Heart right ventricle (tissue), 16 donors: ENCODE measurements at regions of chr1 and their contacts with region 1.

Region 1: DNA sequence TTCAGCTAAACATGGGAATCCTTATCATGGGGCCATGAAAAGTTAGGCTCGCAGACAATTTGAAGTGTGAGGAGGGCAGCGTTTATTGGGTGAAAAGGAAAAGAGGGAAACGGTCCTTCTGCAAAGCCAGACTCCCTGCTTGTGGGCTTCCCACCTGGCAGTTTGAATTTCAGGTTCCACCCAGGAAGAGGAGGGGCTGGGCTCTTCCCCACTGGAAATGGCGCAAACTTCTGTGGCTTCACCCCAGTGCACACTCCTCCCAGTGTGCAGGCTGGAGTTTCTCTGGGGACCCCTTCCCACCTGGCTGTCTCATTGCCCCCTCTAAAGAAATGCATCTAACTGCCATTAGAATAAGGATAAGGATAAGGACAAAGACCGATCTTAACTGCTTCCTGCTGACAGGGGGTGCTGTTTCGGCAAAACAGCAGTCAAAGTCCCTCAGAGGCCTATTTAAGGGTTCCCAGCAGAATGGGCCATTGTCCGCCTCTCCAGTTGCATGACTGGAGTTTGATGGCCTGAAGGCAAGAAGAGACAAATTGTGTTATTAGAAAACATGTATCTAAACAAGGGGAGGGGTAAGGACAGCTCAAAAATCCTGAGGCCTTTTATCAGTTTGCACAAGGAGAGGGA is 20.4 kb downstream of the AIM2 start:
- DNase-seq: no peak
- ATAC-seq: no peak
- H3K4me3 ChIP-seq: no peak overlapping the region
- H3K27ac ChIP-seq: no peak overlapping the region
- H3K4me1 ChIP-seq: peaks cover 0 to 49% (median 13%) of the 10 kb centered on the region in 9 donors
- H3K27me3 ChIP-seq: no peaks in the 10 kb centered on the region
- CTCF ChIP-seq: no peak

Region 2: GRCh38 chr1:159009704-159010361 is 46.4 kb before region 1 on chr1 and contains the start of gene IFI16:
- intact Hi-C with region 1: loop called in 1 of 10 experiments (anchors 5 kb)
- DNase-seq: peak in 1 of 2 donors; percentile 83
- ATAC-seq: peak; percentile 86 to 94 (median 90)
- H3K4me3 ChIP-seq: peak within 1 kb of the TSS; percentile 39 to 76 (median 59)
- H3K27ac ChIP-seq: peak within 1 kb of the TSS; percentile 69 to 96 (median 86)
- H3K4me1 ChIP-seq: peaks cover 3 to 75% (median 34%) of the 10 kb centered on the region in 9 donors
- H3K27me3 ChIP-seq: no peaks in the 10 kb centered on the region
- CTCF ChIP-seq: no peak
- total RNA-seq, gene IFI16: 16.1 to 73.8 (median 21.4) TPM

Region 3: DNA sequence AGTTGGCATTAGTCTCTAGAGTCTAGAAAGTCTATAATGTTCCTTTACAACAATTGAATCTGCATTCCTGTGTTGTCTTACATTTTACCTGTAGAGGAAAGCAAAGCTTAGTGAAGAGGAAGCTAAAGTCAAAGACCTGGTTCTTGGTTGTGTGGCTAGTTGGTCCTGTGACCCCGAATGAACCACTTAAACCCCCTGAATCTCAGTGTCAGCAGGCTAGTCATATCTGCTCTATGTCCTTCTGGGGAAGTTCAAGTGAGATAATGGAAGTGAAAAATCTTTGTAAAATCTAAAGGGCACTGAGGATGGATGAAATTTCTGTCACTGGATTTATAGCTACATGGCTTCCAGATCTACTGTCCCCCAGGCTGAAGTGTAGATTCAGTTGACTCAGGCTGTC is 44.4 kb after region 1 on chr1:
- intact Hi-C with region 1: no loop called
- DNase-seq: no peak
- ATAC-seq: no peak
- H3K4me3 ChIP-seq: no peak overlapping the region
- H3K27ac ChIP-seq: no peak overlapping the region
- H3K4me1 ChIP-seq: peaks cover 0 to 5% (median 0%) of the 10 kb centered on the region in 9 donors
- H3K27me3 ChIP-seq: peaks cover 0 to 14% (median 0%) of the 10 kb centered on the region in 7 donors
- CTCF ChIP-seq: no peak

Region 4: GRCh38 chr1:159141584-159142390 is 85.6 kb after region 1 on chr1:
- intact Hi-C with region 1: no loop called
- DNase-seq: no peak
- ATAC-seq: no peak
- H3K4me3 ChIP-seq: no peak overlapping the region
- H3K27ac ChIP-seq: no peak overlapping the region
- H3K4me1 ChIP-seq: peaks cover 0 to 3% (median 0%) of the 10 kb centered on the region in 9 donors
- H3K27me3 ChIP-seq: peaks cover 0 to 66% (median 52%) of the 10 kb centered on the region in 7 donors
- CTCF ChIP-seq: no peak

Region 5: GRCh38 chr1:159214149-159214760 is 158.1 kb after region 1 on chr1:
- intact Hi-C with region 1: no loop called
- DNase-seq: peak in 1 of 2 donors; percentile 22
- ATAC-seq: peak in 1 of 8 donors; percentile 69
- H3K4me3 ChIP-seq: no peak overlapping the region
- H3K27ac ChIP-seq: no peak overlapping the region
- H3K4me1 ChIP-seq: peaks cover 0 to 14% (median 8%) of the 10 kb centered on the region in 9 donors
- H3K27me3 ChIP-seq: peaks cover 0 to 65% (median 34%) of the 10 kb centered on the region in 7 donors
- CTCF ChIP-seq: peak; percentile 78 to 95 (median 89)